Activated T-helper 2 cell treated with anti-CD3 and anti-CD28 coated beads, Interferon-gamma antibody, Interleukin-2, Interleukin-4, amounts not matched to agents 10 μg/mL and 5 μg/mL and 100 μg/mL, durations not matched to agents 14 hours and 24 hours and 36 hours (primary cell): ENCODE measurements at regions of chr3 and their contacts with region 1.

Region 1: GRCh38 chr3:111989061-111989678 is 9.6 kb upstream of the TAGLN3 start:
- DNase-seq: no peak
- H3K4me3 Mint-ChIP-seq: no peak overlapping the region
- H3K27ac Mint-ChIP-seq: no peak overlapping the region
- H3K4me1 Mint-ChIP-seq: peaks cover 33% of the 10 kb centered on the region
- H3K27me3 Mint-ChIP-seq: no peaks in the 10 kb centered on the region

Region 2: DNA sequence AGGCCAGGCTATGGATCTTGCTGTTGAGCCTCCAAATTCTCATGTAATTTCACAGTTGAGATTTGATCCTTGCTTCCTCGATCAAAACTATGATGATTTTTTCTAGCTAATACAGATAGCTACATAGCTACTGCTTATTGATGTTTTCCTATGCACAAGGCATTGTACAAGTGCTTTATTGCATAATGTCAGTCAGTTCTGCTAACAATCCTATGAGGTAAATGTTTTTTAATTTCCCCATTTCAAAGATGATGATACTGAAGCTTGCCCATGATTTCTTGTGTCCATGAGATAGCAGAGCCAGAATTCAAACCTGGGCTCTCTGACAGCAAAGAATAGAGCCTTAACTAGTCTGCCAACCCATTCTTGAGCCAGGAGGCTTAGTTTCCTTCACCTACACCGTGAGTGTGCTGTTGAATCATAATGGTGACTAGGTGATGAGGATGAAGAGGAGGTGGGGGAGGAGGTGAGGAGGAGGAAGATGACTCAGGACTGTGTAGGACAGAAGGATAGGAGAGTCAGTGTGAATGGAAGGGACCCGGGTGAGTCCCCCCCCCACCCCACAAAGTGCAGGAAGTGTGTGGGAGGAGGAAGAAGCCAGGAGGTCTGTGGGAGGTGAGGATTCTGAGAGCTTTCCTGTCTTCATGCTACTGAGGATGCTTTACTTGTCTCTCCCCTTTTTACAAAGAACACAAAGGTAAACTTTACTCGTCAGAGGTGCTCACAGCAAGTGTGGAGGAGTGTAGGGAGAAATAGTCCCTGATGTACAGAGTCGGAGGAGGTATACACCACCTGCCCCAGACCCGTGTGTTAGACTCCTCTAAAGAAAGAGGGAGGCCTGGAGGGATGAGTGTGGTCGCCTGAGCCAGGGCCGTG is 13.2 kb after region 1 on chr3:
- intact Hi-C with region 1: loop called (anchors 1 kb)
- DNase-seq: no peak
- H3K4me3 Mint-ChIP-seq: peak overlapping the region; percentile 37
- H3K27ac Mint-ChIP-seq: peak overlapping the region; percentile 80
- H3K4me1 Mint-ChIP-seq: peaks cover 48% of the 10 kb centered on the region
- H3K27me3 Mint-ChIP-seq: no peaks in the 10 kb centered on the region